ENCODE measurements at regions of chr15 and their contacts with region 1.

Region 1: DNA sequence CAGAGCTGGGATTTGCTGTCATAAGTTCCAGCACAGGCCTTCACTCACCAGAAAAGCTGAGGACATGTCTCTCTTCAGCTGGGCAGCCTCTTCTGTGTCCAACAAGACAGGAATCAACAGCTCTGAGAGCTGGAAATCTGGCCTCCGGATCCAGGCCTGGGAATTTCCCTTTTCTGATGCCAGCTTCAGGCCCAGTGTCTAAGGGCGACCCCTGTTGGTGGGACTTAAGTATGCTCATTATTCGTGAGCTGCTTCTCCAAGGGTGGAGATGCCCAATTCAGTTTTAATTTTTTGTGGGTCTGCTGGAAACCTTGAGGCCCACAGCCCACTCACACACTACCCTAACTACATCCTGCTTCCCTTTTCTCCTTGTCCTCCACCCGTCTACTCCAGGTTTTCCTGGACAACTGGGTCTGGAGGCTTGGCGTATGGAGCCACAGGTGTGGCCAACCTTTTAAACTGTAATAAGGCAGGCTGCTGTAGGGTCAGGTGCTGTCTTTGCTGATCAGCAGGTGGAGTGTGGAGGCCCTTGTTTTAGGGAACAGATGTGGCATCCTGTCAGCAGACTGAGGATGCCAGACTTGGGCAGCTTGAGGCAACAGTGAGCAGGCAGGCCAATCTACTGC is 2.6 kb upstream of the CEMIP start:
- DNase-seq: peak; percentile 73
- H3K4me3 Mint-ChIP-seq: no peak overlapping the region
- H3K27ac Mint-ChIP-seq: no peak overlapping the region
- H3K4me1 Mint-ChIP-seq: peaks cover 11% of the 10 kb centered on the region
- H3K27me3 Mint-ChIP-seq: peaks cover 36% of the 10 kb centered on the region

Region 2: GRCh38 chr15:80121546-80121945 is 655.0 kb before region 1 on chr15:
- CTCF ChIA-PET with region 1: no interaction called
- POLR2A ChIA-PET with region 1: no interaction called
- intact Hi-C with region 1: no loop called
- DNase-seq: no peak
- H3K4me3 Mint-ChIP-seq: no peak overlapping the region
- H3K27ac Mint-ChIP-seq: no peak overlapping the region
- H3K4me1 Mint-ChIP-seq: peaks cover 2% of the 10 kb centered on the region
- H3K27me3 Mint-ChIP-seq: no peaks in the 10 kb centered on the region

Region 3: DNA sequence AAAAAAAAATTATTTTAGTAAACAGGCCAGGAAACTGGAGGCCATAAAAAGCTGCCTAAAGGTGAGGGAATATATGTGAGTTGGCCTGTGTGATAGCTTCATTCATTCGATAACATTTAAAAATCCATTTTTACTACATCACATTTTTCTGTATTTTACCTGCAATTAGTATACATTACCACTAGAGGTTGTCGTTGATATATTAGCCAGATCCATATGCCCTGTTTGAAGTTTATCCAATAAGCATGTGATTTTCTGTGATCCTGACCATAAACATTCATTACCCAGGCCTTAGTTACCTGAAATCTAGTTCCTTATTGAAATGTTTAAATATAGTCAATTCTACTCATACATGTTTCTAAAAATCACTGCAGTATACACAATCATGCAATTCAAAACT is 301.0 kb before region 1 on chr15:
- CTCF ChIA-PET with region 1: interaction called, 16 read pairs
- POLR2A ChIA-PET with region 1: no interaction called
- intact Hi-C with region 1: no loop called
- DNase-seq: no peak
- H3K4me3 Mint-ChIP-seq: no peak overlapping the region
- H3K27ac Mint-ChIP-seq: no peak overlapping the region
- H3K4me1 Mint-ChIP-seq: no peaks in the 10 kb centered on the region
- H3K27me3 Mint-ChIP-seq: peaks cover 31% of the 10 kb centered on the region

Region 4: GRCh38 chr15:80695104-80695910 is 81.2 kb before region 1 on chr15 and contains the start of gene ABHD17C:
- CTCF ChIA-PET with region 1: interaction called, 23 read pairs
- POLR2A ChIA-PET with region 1: no interaction called
- intact Hi-C with region 1: loop called (anchors 5 kb)
- DNase-seq: peak; percentile 55
- H3K4me3 Mint-ChIP-seq: peak within 1 kb of the TSS; percentile 86
- H3K27ac Mint-ChIP-seq: peak within 1 kb of the TSS; percentile 71
- H3K4me1 Mint-ChIP-seq: peaks cover 21% of the 10 kb centered on the region
- H3K27me3 Mint-ChIP-seq: peaks cover 3% of the 10 kb centered on the region
- total RNA-seq, gene ABHD17C: 6.1 to 9.0 TPM

Region 5: GRCh38 chr15:80798911-80799310 is 22.4 kb after region 1 on chr15:
- CTCF ChIA-PET with region 1: interaction called, 22 read pairs
- POLR2A ChIA-PET with region 1: interaction called, 3 read pairs
- intact Hi-C with region 1: no loop called
- DNase-seq: no peak
- H3K4me3 Mint-ChIP-seq: no peak overlapping the region
- H3K27ac Mint-ChIP-seq: no peak overlapping the region
- H3K4me1 Mint-ChIP-seq: peaks cover 11% of the 10 kb centered on the region
- H3K27me3 Mint-ChIP-seq: peaks cover 10% of the 10 kb centered on the region

Region 6: DNA sequence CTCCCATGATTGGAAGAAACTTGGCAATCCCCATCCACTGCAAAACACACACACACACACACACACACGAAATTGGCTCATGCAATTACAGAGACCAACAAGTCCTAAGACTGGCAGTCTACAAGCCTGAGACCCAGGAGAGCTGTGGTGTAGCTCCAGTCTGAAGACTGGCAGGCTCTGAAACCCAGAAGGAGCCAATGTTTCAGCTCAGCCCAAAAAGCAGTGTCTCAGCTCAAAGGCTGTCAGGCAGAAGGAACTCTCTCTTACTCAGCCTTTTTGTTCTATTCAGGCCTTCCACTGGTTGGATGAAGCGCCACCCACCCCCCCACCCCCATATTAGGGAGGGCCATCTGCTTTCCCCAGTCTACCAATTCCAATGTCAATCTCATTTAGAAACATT is 181.0 kb after region 1 on chr15:
- CTCF ChIA-PET with region 1: interaction called, 6 read pairs
- POLR2A ChIA-PET with region 1: no interaction called
- intact Hi-C with region 1: loop called (anchors 5 kb)
- DNase-seq: no peak
- H3K4me3 Mint-ChIP-seq: no peak overlapping the region
- H3K27ac Mint-ChIP-seq: no peak overlapping the region
- H3K4me1 Mint-ChIP-seq: peaks cover 27% of the 10 kb centered on the region
- H3K27me3 Mint-ChIP-seq: no peaks in the 10 kb centered on the region